Mammary epithelial cell (primary cell): ENCODE measurements at regions of chr15 and their contacts with region 1.

Region 1: DNA sequence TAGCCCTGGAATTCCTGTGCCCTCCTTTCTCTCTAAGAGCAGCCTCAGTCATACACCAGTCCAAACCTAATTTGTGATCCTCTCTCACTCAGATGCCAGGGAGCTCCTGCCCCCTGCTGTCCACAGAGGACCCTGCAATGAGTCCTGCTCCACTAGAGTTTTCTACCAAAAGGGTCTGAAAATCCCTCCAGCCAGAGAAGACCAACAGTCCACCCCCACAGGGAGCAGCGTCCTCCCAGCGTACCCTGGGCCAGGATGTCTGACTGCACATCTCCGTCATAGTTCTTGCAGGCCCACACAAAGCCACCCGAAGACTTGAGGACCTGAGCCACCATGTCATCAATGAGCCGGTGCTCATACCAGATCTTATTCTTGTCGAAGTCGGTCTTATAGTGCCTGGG is 15.4 kb downstream of the IDH2 start:
- DNase-seq: peak; percentile 36
- H3K4me3 ChIP-seq: no peak overlapping the region
- H3K27ac ChIP-seq: no peak overlapping the region
- H3K4me1 ChIP-seq: no peaks in the 10 kb centered on the region
- H3K27me3 ChIP-seq: no peaks in the 10 kb centered on the region
- CTCF ChIP-seq: peak; percentile 84 to 88

Region 2: GRCh38 chr15:89740137-89740536 is 346.7 kb before region 1 on chr15:
- CTCF ChIA-PET with region 1: no interaction called
- dilution Hi-C with region 1: no loop called
- in situ Hi-C with region 1: no loop called
- intact Hi-C with region 1: loop called (anchors 1 kb)
- DNase-seq: peak; percentile 52
- H3K4me3 ChIP-seq: no peak overlapping the region
- H3K27ac ChIP-seq: no peak overlapping the region
- H3K4me1 ChIP-seq: no peaks in the 10 kb centered on the region
- H3K27me3 ChIP-seq: no peaks in the 10 kb centered on the region
- CTCF ChIP-seq: peak; percentile 89

Region 3: GRCh38 chr15:89760303-89761008 is 326.4 kb before region 1 on chr15:
- CTCF ChIA-PET with region 1: no interaction called
- dilution Hi-C with region 1: no loop called
- in situ Hi-C with region 1: loop called (anchors 10 to 25 kb)
- intact Hi-C with region 1: loop called (anchors 1 kb)
- DNase-seq: peak; percentile 68
- H3K4me3 ChIP-seq: no peak overlapping the region
- H3K27ac ChIP-seq: no peak overlapping the region
- H3K4me1 ChIP-seq: peaks cover 16% of the 10 kb centered on the region
- H3K27me3 ChIP-seq: no peaks in the 10 kb centered on the region
- CTCF ChIP-seq: peak; percentile 92 to 99

Region 4: DNA sequence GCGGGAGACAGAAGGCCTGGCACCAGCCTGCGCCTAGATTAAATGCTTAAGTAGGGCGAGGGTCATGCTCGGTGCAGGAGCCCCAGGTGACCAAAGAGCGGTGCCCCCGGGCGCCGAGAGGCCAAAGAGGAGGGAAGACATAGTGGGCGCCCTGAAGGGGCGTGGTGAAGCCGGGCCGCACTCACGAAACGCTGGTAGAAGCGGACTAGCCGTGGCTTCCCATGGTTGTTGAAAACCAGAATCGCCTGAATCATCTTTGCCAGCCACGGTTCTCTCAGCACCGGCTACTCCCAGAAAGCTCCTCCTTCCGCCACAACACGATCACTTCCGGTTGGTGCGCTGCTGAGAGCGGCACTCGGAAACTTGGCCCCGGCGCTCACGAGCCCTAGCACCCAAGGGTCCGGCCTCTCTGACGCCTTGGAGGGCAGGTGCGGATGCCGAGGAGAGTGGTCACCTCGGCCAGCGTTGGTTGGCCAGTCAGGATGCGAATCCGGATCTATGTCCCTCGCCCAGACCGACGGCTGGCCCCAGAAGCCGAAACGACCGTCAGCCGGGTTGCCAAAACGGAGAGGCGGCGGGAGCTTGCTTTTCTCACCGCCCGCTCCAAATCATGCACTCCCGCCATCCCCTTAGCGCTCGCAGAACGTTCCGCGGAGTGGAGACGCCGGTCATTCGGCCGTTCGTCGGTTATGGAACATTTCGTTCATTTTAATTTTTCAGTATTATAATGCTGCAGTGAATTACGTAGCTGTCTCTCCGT is 193.0 kb before region 1 on chr15 and contains the start of gene AP3S2:
- CTCF ChIA-PET with region 1: no interaction called
- dilution Hi-C with region 1: no loop called
- in situ Hi-C with region 1: loop called in 1 of 2 experiments (anchors 5 kb)
- intact Hi-C with region 1: loop called (anchors 1 kb)
- DNase-seq: peak; percentile 96
- H3K4me3 ChIP-seq: peak within 1 kb of the TSS; percentile 83 to 93 (median 91)
- H3K27ac ChIP-seq: peak within 1 kb of the TSS; percentile 92
- H3K4me1 ChIP-seq: peaks cover 6% of the 10 kb centered on the region
- H3K27me3 ChIP-seq: no peaks in the 10 kb centered on the region
- CTCF ChIP-seq: no peak
- total RNA-seq, gene AP3S2: 34.6 to 53.0 TPM

Region 5: GRCh38 chr15:90031231-90031791 is 55.6 kb before region 1 on chr15:
- CTCF ChIA-PET with region 1: no interaction called
- dilution Hi-C with region 1: no loop called
- in situ Hi-C with region 1: no loop called
- intact Hi-C with region 1: no loop called
- DNase-seq: peak; percentile 36
- H3K4me3 ChIP-seq: no peak overlapping the region
- H3K27ac ChIP-seq: no peak overlapping the region
- H3K4me1 ChIP-seq: peaks cover 3% of the 10 kb centered on the region
- H3K27me3 ChIP-seq: no peaks in the 10 kb centered on the region
- CTCF ChIP-seq: no peak

Region 6: DNA sequence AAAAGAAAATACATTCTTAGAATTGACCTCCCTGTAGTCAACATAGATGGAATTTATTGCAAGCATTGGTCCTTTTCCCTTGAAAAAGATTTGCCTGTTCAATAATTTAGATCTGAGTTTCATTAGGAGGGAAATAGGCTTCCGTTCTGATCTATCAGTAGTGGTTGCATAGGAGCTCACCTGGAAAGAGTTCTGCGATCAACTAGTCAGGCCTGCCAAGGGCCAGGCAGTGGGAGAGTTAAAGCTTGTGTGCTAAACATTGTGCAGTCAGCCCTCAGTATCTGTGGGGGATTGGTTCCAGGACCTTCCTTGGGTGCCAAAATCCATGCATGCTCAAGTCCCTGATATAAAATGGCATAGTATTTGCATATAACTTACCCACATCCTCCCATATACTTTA is 45.0 kb after region 1 on chr15:
- CTCF ChIA-PET with region 1: no interaction called
- dilution Hi-C with region 1: loop called (anchors 5 kb)
- in situ Hi-C with region 1: no loop called
- intact Hi-C with region 1: no loop called
- DNase-seq: no peak
- H3K4me3 ChIP-seq: no peak overlapping the region
- H3K27ac ChIP-seq: no peak overlapping the region
- H3K4me1 ChIP-seq: no peaks in the 10 kb centered on the region
- H3K27me3 ChIP-seq: peaks cover 2% of the 10 kb centered on the region
- CTCF ChIP-seq: no peak

Region 7: GRCh38 chr15:90400406-90401314 is 313.8 kb after region 1 on chr15:
- CTCF ChIA-PET with region 1: no interaction called
- dilution Hi-C with region 1: no loop called
- in situ Hi-C with region 1: no loop called
- intact Hi-C with region 1: no loop called
- DNase-seq: peak; percentile 91
- H3K4me3 ChIP-seq: peak overlapping the region; percentile 8 to 31 (median 12)
- H3K27ac ChIP-seq: peak overlapping the region; percentile 95
- H3K4me1 ChIP-seq: peaks cover 44% of the 10 kb centered on the region
- H3K27me3 ChIP-seq: no peaks in the 10 kb centered on the region
- CTCF ChIP-seq: no peak